HAP-1 (cell line): ENCODE measurements at regions of chr3 and their contacts with region 1.

Region 1: DNA sequence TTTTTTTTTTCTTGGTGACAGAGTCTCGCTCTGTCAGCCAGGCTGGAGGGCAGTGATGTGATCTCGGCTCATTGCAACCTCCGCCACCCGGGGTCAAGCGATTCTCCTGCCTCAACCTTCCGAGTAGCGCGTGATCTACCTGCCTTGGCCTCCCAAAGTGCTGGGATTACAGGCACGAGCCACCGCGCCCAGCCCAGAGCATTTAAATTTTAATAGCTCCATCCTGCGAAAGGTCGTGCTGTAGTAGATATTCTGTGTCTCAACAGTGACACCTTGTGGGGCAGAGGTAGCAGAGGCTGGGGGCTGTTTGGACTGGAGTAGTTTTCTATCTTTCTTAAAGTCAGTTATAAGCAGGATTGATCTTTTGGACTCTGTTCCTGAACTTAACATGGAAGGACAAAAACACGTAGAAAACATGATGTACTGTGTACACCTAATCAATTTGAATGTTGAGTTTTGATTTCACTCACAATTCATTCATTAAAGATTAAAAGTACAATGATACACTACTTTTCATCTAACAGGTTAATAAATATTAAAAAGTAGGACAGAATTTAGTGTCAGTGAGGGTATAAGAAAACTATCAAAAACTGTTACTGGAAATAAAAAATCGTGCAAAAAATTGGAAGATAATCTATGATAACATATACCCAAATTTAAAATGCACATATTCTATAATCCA is 11.0 kb upstream of the PDCD6IP start:
- DNase-seq: peak; percentile 81 to 82
- H3K4me3 ChIP-seq: no peak overlapping the region
- H3K4me1 ChIP-seq: peaks cover 19% of the 10 kb centered on the region
- H3K27me3 ChIP-seq: no peaks in the 10 kb centered on the region

Region 2: DNA sequence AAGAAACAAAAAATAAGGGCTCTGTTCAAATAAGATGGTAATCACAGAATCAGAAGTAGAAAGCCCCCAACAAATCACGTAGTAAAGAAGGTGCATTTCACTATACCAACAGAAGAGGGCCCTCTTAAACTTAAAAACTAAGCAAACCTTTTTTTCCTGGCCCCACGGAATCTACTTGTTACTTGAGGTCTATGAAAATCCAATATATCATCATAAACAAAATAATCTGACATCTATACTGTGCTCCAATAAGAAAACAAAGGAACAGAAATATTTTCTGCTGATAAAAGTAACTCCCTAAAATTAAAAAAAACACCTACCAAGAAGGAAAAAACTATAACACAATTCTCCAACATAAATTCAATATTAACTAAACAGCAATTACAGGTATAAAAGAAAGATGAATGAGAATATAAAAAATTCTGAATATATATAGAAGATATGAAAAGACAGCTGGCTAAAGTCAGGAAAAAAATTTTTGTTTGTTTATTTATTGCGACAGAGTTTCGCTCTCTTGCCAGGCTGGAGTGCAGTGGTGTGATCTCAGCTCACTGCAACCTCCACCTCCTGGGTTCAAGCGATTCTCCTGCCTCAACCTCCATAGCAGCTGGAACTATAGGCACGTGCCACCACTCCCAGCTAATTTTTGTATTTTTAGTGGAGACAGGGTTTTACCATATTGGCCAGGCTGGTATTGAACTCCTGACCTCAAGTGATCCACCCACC is 151.2 kb before region 1 on chr3:
- in situ Hi-C with region 1: loop called (anchors 10 kb)
- DNase-seq: peak; percentile 36 to 66
- H3K4me3 ChIP-seq: no peak overlapping the region
- H3K4me1 ChIP-seq: no peaks in the 10 kb centered on the region
- H3K27me3 ChIP-seq: no peaks in the 10 kb centered on the region

Region 3: DNA sequence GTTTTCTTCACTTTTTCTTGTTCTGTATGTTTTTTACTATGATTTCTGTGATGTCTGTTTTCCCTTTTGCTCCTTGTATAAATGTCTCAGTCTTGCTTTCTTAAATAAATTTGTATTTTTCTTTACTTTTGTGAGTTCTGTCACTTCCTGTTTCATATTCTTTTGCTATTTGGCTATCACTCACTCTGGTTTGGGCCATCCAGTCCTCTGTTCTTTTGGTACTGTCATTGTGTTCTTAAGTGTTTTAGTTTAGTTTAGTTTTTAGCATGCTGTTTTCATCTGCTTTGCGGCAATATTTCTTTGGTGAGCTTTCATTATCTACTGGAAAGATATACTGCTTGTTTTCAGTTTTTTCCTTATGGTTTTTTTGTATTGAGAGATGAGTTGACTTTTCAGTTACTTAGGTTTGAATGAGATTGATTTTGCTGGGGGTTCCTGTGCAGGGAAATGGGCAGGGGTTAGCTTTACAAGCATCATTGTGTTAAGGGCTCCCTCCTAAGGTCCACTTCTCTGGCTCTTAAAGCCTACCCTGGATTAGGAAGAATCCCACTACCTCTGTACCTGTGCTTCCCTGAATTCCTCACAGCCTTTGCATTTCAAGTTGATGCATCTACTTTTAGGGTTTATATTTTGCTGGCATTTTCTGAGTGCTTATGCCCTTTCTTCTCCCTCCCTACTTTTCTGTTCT is 46.1 kb after region 1 on chr3:
- in situ Hi-C with region 1: no loop called
- DNase-seq: no peak
- H3K4me3 ChIP-seq: no peak overlapping the region
- H3K4me1 ChIP-seq: no peaks in the 10 kb centered on the region
- H3K27me3 ChIP-seq: no peaks in the 10 kb centered on the region